A673 (cell line): ENCODE measurements at regions of chr1 and their contacts with region 1.

Region 1: GRCh38 chr1:30809514-30810263 is 52.1 kb upstream of the LAPTM5 start:
- DNase-seq: peak; percentile 87
- H3K4me3 ChIP-seq: no peak overlapping the region
- H3K27ac ChIP-seq: peak overlapping the region; percentile 16
- H3K4me1 ChIP-seq: peaks cover 38% of the 10 kb centered on the region
- H3K27me3 ChIP-seq: peaks cover 8% of the 10 kb centered on the region
- CTCF ChIP-seq: no peak

Region 2: GRCh38 chr1:30790850-30791778 is 18.6 kb before region 1 on chr1:
- CTCF ChIA-PET with region 1: no interaction called
- POLR2A ChIA-PET with region 1: interaction called, 18 read pairs
- intact Hi-C with region 1: no loop called
- DNase-seq: no peak
- H3K4me3 ChIP-seq: no peak overlapping the region
- H3K27ac ChIP-seq: no peak overlapping the region
- H3K4me1 ChIP-seq: peaks cover 4% of the 10 kb centered on the region
- H3K27me3 ChIP-seq: peaks cover 6% of the 10 kb centered on the region
- CTCF ChIP-seq: no peak

Region 3: DNA sequence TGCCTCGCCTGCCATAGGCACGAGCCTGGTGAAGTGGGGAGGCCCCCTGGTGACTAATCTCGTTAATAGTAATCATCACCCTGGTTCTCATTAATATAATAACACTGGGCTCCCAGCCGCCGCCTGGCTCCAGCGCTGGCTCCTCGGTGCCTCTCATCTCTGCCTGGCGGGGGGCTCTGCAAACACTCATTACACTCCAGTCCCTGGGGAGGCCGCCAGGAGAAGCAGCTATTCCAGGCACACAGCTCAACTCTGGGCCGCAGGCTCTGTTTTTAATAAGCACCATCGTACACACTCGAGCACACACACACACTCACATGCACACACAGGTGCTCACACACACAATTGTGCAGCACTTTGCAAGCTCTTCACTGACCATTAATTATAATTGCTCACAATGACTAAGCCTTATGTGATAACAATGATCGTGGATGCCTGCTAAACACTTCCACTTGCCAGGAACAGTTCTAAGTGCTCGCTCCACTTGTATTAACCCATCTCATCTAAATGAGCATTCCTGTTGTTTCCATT is 46.6 kb after region 1 on chr1:
- CTCF ChIA-PET with region 1: no interaction called
- POLR2A ChIA-PET with region 1: no interaction called
- intact Hi-C with region 1: loop called (anchors 5 kb)
- DNase-seq: peak; percentile 94
- H3K4me3 ChIP-seq: no peak overlapping the region
- H3K27ac ChIP-seq: no peak overlapping the region
- H3K4me1 ChIP-seq: peaks cover 8% of the 10 kb centered on the region
- H3K27me3 ChIP-seq: peaks cover 73% of the 10 kb centered on the region
- CTCF ChIP-seq: no peak